ENCODE measurements at regions of chr20 and their contacts with region 1.

Region 1: DNA sequence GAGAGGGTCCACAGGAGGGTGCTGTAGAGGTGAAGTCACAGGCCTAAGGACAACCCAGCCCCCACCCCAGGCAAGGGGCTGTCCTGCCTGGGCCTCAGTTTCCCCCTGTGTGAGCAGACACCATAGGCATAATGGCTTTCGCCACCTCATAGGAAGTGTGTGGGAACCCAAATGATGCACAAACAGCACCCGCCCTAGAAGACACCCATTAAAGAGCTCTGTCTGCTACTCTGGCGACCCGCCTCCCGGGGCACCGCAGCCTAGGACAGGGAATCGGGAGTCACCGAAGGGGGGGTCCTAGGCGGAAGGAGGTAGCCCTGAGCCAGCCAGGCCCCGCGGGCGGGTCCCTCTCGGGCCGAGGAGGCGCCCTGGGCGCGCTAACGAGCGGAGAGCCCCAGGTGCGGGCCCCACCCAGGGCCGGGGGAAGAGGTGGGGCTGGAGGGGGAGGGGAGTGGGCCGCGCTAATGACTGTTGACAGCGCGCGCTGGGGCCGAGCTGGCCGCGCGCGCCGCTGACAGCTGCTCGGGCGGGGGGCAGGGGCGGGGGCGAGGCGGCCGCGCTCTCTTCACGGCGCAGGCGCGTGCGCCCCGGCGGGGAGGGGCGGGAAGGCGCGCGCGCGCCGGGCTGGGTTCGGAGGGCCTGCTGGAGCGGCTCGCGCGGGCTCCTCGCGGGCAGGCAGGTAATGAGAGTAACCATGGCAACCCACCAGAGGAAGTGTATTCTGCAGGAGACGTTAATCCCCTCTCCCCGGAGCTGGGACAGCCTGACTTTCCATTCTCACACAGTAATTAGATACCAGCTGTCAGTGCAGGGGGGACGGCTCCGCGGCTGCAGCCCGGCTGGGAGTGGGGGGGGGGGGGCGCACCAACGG is 48.9 kb downstream of the NOL4L start:
- DNase-seq: peak in 1 of 2 donors; percentile 48
- ATAC-seq: peak; percentile 52 to 82 (median 71)
- H3K4me3 ChIP-seq: peak overlapping the region in 9 of 10 donors; percentile 39 to 59 (median 55)
- H3K27ac ChIP-seq: peak overlapping the region in 4 of 10 donors; percentile 37 to 85 (median 46)
- H3K4me1 ChIP-seq: peaks cover 4 to 50% (median 16%) of the 10 kb centered on the region in 9 donors
- H3K27me3 ChIP-seq: peaks cover 0 to 12% (median 0%) of the 10 kb centered on the region in 7 donors
- CTCF ChIP-seq: no peak

Region 2: DNA sequence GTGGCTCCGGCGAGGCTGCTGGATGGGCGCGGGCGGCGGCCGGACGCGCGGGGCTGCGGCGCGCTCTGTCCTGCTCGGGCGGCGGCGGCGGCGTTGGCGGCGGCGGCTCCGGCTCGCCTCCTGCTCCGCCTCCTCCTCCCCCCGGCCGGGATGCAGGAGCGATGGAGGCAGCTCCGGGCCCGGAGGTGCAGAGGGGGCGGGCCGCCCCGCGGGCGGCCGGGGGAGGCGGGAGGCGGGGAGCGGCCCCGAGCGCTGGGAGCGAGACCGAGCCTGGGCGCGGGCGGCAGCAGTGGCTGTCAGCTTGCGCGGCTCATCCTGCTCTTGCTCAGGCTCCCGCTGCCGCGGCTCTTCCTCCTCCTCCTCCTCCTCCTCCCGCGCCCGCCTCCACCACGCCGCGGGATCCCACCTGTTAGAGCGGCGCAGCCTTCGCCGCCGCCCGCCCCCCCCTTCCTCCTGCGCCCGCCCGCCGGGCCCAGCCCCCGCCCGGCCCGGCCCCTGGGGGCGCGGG is 48.9 kb after region 1 on chr20 and contains the start of gene NOL4L:
- intact Hi-C with region 1: loop called in 1 of 10 experiments (anchors 10 kb)
- DNase-seq: peak in 1 of 2 donors; percentile 34
- ATAC-seq: peak in 2 of 8 donors; percentile 6 to 13
- H3K4me3 ChIP-seq: peak within 1 kb of the TSS; percentile 35 to 71 (median 66)
- H3K27ac ChIP-seq: peak within 1 kb of the TSS in 4 of 10 donors; percentile 30 to 73 (median 64)
- H3K4me1 ChIP-seq: peaks cover 0 to 30% (median 4%) of the 10 kb centered on the region in 9 donors
- H3K27me3 ChIP-seq: peaks cover 0 to 44% (median 21%) of the 10 kb centered on the region in 7 donors
- CTCF ChIP-seq: no peak
- total RNA-seq, gene NOL4L: 4.4 to 10.1 (median 6.0) TPM

Region 3: DNA sequence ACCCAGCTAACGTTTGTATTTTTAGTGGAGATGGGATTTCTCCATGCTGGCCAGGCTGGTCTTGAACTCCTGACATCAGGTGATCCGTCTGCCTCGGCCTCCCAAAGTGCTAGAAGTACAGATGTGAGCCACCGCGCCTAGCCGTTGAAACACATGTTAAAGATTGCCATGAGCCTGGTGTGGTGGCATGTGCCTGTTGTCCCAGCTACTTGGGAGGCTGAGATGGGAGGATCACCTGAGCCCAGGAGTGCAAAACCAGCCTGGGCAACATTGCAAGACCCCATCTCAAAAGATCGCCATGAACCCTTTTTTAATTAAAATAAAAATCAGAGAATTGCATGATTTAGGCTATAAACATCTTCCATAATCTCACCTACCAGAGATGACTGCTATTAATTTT is 325.3 kb after region 1 on chr20:
- intact Hi-C with region 1: loop called in 1 of 10 experiments (anchors 5 kb)
- DNase-seq: no peak
- ATAC-seq: no peak
- H3K4me3 ChIP-seq: no peak overlapping the region
- H3K27ac ChIP-seq: no peak overlapping the region
- H3K4me1 ChIP-seq: peaks cover 0 to 6% (median 0%) of the 10 kb centered on the region in 9 donors
- H3K27me3 ChIP-seq: no peaks in the 10 kb centered on the region
- CTCF ChIP-seq: no peak